ENCODE measurements at regions of chr2 and their contacts with region 1.

Region 1: GRCh38 chr2:26088032-26088643 is 54.3 kb downstream of the RAB10 start:
- DNase-seq: peak; percentile 33
- H3K4me3 Mint-ChIP-seq: no peak overlapping the region
- H3K27ac Mint-ChIP-seq: no peak overlapping the region
- H3K4me1 Mint-ChIP-seq: peaks cover 28% of the 10 kb centered on the region
- H3K27me3 Mint-ChIP-seq: no peaks in the 10 kb centered on the region

Region 2: GRCh38 chr2:25851740-25852503 is 236.2 kb before region 1 on chr2:
- CTCF ChIA-PET with region 1: no interaction called
- POLR2A ChIA-PET with region 1: no interaction called
- DNase-seq: peak; percentile 68
- H3K4me3 Mint-ChIP-seq: peak overlapping the region; percentile 47
- H3K27ac Mint-ChIP-seq: peak overlapping the region; percentile 51
- H3K4me1 Mint-ChIP-seq: peaks cover 36% of the 10 kb centered on the region
- H3K27me3 Mint-ChIP-seq: no peaks in the 10 kb centered on the region

Region 3: GRCh38 chr2:26068602-26069298 is 19.4 kb before region 1 on chr2:
- CTCF ChIA-PET with region 1: interaction called, 10 read pairs
- POLR2A ChIA-PET with region 1: no interaction called
- DNase-seq: peak; percentile 62
- H3K4me3 Mint-ChIP-seq: peak overlapping the region; percentile 26
- H3K27ac Mint-ChIP-seq: peak overlapping the region; percentile 80
- H3K4me1 Mint-ChIP-seq: peaks cover 51% of the 10 kb centered on the region
- H3K27me3 Mint-ChIP-seq: no peaks in the 10 kb centered on the region

Region 4: DNA sequence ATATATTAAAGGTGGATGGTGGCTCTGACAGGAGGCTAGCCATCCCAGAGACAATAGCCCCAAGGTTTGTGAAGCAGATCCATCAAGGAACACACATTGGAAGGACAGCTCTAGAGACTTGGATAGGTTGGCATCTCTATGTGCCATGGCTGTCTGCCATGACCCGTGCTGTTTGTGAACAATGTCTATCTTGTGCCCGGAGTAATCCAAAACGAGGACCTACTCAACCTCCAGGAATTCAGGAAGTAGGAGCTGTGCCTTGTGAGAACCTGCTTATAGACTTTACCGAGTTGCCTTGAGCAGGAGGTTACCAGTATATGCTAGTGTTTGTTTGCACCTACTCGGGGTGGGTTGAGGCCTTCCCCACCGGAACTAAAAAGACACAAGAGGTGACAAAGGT is 214.7 kb after region 1 on chr2:
- CTCF ChIA-PET with region 1: no interaction called
- POLR2A ChIA-PET with region 1: no interaction called
- DNase-seq: no peak
- H3K4me3 Mint-ChIP-seq: no peak overlapping the region
- H3K27ac Mint-ChIP-seq: no peak overlapping the region
- H3K4me1 Mint-ChIP-seq: no peaks in the 10 kb centered on the region
- H3K27me3 Mint-ChIP-seq: no peaks in the 10 kb centered on the region